ENCODE measurements at regions of chr4 and their contacts with region 1.

Region 1: GRCh38 chr4:7843831-7844593 is 95.6 kb downstream of the AFAP1 start:
- DNase-seq: peak in 1 of 2 experiments; percentile 67
- H3K4me3 ChIP-seq: no peak overlapping the region
- H3K27ac ChIP-seq: peak overlapping the region; percentile 96
- H3K4me1 ChIP-seq: peaks cover 46% of the 10 kb centered on the region
- H3K27me3 ChIP-seq: no peaks in the 10 kb centered on the region
- CTCF ChIP-seq: peak; percentile 63

Region 2: DNA sequence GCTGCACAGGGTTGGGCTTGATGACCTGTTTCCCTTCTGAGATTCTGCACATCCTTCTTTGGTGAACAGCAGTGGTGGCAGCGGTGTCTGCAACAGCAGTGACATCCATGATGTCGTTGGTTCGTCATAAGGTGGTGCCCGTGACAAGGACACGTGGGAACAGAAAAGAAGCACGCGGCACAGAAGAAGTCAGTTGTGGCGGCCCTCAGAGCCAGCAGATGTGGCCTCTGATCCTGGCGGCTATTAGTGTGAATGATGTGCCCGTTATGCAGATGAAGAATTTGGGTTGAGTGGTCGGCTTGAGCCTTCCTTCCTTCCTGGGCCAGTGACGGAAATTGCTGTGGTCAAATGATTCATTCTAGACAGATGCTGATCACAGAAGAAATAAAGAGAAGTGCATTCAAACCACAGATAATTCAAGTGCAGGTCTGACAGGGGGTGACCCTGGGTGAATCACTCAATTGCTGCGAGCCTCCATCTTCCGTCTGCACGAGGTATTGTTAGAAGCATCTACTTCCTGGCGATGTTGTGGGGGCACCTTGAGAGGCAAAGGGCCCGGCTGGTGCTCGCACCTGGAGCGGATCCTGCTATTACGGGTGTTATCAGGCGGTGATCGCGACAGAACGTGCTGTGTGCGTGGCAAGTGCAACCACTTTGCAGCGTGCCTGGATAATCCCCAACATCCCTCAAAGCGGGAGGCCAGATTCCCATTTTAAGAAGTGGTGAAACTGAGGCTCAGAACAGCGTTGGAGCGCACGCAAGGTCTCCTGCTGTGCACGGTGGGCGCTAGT is 194.1 kb before region 1 on chr4:
- CTCF ChIA-PET with region 1: no interaction called
- POLR2A ChIA-PET with region 1: no interaction called
- intact Hi-C with region 1: no loop called
- DNase-seq: peak; percentile 41 to 59
- H3K4me3 ChIP-seq: no peak overlapping the region
- H3K27ac ChIP-seq: no peak overlapping the region
- H3K4me1 ChIP-seq: peaks cover 13% of the 10 kb centered on the region; the same call in 1 of the 2 replicates
- H3K27me3 ChIP-seq: no peaks in the 10 kb centered on the region
- CTCF ChIP-seq: no peak

Region 3: GRCh38 chr4:7861440-7861881 is 17.4 kb after region 1 on chr4:
- CTCF ChIA-PET with region 1: interaction called, 4 read pairs
- POLR2A ChIA-PET with region 1: no interaction called
- intact Hi-C with region 1: loop called (anchors 2 kb)
- DNase-seq: peak; percentile 56 to 78
- H3K4me3 ChIP-seq: no peak overlapping the region
- H3K27ac ChIP-seq: peak overlapping the region; percentile 37; the same call in 1 of the 2 replicates
- H3K4me1 ChIP-seq: 0 out of 2 replicates have a peak, but pooled peaks cover 5% of the 10 kb centered on the region
- H3K27me3 ChIP-seq: no peaks in the 10 kb centered on the region
- CTCF ChIP-seq: no peak

Region 4: DNA sequence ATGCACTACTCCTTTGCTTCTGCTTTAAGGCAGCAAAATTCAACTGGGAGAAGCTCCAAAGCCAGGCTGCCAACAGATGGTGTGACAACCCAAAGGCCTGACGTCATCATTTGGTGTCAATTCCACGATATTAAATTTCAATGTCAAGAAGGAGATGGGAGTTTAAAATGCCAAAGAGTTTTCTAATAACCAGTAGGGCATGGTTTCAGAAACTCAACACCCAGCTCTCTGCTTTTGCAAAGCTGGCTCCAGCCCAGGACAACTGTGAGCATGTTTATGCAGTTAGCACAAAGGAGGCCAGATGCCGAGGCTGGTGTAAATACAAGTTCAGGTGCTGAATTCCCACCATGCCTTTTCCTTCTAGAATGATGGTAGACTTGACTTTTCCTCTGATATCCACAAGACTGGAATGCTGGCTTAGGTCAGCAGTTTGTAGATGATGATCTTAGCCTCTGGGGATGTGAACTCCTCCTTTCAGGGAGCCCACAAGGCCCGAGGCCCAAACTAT is 28.3 kb after region 1 on chr4:
- CTCF ChIA-PET with region 1: interaction called, 3 read pairs
- POLR2A ChIA-PET with region 1: no interaction called
- intact Hi-C with region 1: loop called (anchors 1 kb)
- DNase-seq: peak; percentile 37 to 77
- H3K4me3 ChIP-seq: no peak overlapping the region
- H3K27ac ChIP-seq: 0 out of 2 replicates have a peak overlapping the region, but pooled peaks have one; percentile 29
- H3K4me1 ChIP-seq: no peaks in the 10 kb centered on the region; the same call in 1 of the 2 replicates
- H3K27me3 ChIP-seq: no peaks in the 10 kb centered on the region
- CTCF ChIP-seq: no peak

Region 5: GRCh38 chr4:7929118-7929951 is 85.3 kb after region 1 on chr4:
- CTCF ChIA-PET with region 1: no interaction called
- POLR2A ChIA-PET with region 1: interaction called, 3 read pairs
- intact Hi-C with region 1: loop called (anchors 2 kb)
- DNase-seq: peak; percentile 77 to 82
- H3K4me3 ChIP-seq: no peak overlapping the region
- H3K27ac ChIP-seq: no peak overlapping the region
- H3K4me1 ChIP-seq: peaks cover 31% of the 10 kb centered on the region
- H3K27me3 ChIP-seq: no peaks in the 10 kb centered on the region
- CTCF ChIP-seq: 0 out of 2 replicates have a peak, but pooled peaks have one; percentile 22

Region 6: GRCh38 chr4:7973545-7973981 is 129.6 kb after region 1 on chr4:
- CTCF ChIA-PET with region 1: no interaction called
- POLR2A ChIA-PET with region 1: interaction called, 19 read pairs
- intact Hi-C with region 1: loop called (anchors 2 kb)
- DNase-seq: peak; percentile 51 to 87
- H3K4me3 ChIP-seq: no peak overlapping the region
- H3K27ac ChIP-seq: peak overlapping the region; percentile 94
- H3K4me1 ChIP-seq: peaks cover 82% of the 10 kb centered on the region
- H3K27me3 ChIP-seq: no peaks in the 10 kb centered on the region
- CTCF ChIP-seq: no peak

Region 7: GRCh38 chr4:8162625-8163024 is 318.6 kb after region 1 on chr4:
- CTCF ChIA-PET with region 1: no interaction called
- POLR2A ChIA-PET with region 1: interaction called, 26 read pairs
- intact Hi-C with region 1: no loop called
- DNase-seq: no peak
- H3K4me3 ChIP-seq: no peak overlapping the region
- H3K27ac ChIP-seq: no peak overlapping the region
- H3K4me1 ChIP-seq: peaks cover 5% of the 10 kb centered on the region
- H3K27me3 ChIP-seq: no peaks in the 10 kb centered on the region
- CTCF ChIP-seq: no peak

Measured in PC-9 (cell line).